Heart right ventricle (tissue), 16 donors: ENCODE measurements at regions of chr6 and their contacts with region 1.

Region 1: GRCh38 chr6:109059571-109060021 is 35.0 kb downstream of the SESN1 start:
- DNase-seq: no peak
- ATAC-seq: peak; percentile 57 to 85 (median 82)
- H3K4me3 ChIP-seq: peak overlapping the region in 1 of 10 donors; percentile 12
- H3K27ac ChIP-seq: peak overlapping the region in 8 of 10 donors; percentile 2 to 67 (median 44)
- H3K4me1 ChIP-seq: peaks cover 7 to 63% (median 52%) of the 10 kb centered on the region in 9 donors
- H3K27me3 ChIP-seq: no peaks in the 10 kb centered on the region
- CTCF ChIP-seq: peak in 6 of 9 donors; percentile 29 to 55 (median 40)

Region 2: GRCh38 chr6:108904741-108905140 is 154.9 kb before region 1 on chr6:
- intact Hi-C with region 1: loop called in 1 of 10 experiments (anchors 5 kb)
- DNase-seq: no peak
- ATAC-seq: no peak
- H3K4me3 ChIP-seq: no peak overlapping the region
- H3K27ac ChIP-seq: peak overlapping the region in 2 of 10 donors; percentile 49 to 78
- H3K4me1 ChIP-seq: peaks cover 0 to 46% (median 13%) of the 10 kb centered on the region in 9 donors
- H3K27me3 ChIP-seq: no peaks in the 10 kb centered on the region
- CTCF ChIP-seq: no peak